Psoas muscle (tissue), 8 donors: ENCODE measurements at regions of chr16 and their contacts with region 1.

Region 1: DNA sequence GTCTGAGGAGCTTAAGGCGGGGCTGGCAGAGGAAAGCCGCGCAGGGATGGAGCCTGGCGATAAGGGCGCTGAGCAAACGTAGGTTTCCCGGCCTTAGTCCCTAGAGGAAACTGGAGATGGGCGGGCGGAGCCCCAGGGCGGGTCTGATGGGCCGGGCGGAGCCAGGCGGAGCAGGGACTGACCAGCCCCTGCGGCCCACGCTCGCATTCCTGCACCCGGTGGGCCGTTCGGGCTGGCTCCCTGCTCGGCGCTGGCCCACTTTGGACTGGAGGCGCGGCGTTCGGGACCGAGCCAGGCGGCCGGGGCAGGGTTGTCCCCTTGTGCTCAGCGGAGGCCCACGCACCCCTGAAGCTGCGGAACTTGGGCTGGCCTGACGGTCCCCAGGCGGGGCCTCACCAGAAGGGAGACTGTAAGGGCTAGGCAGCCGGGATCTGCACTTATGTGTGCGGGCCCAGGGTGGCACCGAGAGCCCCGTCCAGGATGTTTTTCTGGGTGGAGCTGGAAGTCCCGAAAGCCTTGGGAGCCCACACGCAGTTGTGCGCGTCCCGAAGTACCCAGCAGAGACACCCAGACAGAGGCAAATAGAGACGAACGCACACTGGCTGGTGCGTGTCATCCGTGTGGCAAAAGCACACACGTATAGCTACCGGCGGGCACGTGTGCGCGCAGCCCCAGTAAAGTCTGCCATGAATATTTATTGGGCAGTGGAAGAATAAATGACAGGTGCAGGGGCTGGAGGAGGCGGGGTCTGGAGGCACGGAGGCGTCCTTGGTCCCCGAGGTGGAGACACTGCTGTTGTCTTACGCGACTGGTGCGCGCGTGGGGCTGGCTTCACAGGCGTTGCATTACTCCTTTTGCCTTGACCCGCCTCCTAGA is 1.4 kb downstream of the PYDC1 start:
- DNase-seq: peak; percentile 76 to 89
- ATAC-seq: peak; percentile 68 to 76 (median 73)
- H3K4me3 ChIP-seq: peak overlapping the region; percentile 89
- H3K27ac ChIP-seq: peak overlapping the region; percentile 99
- H3K4me1 ChIP-seq: peaks cover 52% of the 10 kb centered on the region
- H3K27me3 ChIP-seq: no peaks in the 10 kb centered on the region
- CTCF ChIP-seq: no peak

Region 2: GRCh38 chr16:31179747-31180459 is 35.6 kb before region 1 on chr16 and contains the start of gene FUS:
- intact Hi-C with region 1: loop called (anchors 2 to 5 kb)
- DNase-seq: peak; percentile 88 to 96
- ATAC-seq: peak; percentile 81 to 88 (median 85)
- H3K4me3 ChIP-seq: peak within 1 kb of the TSS; percentile 95
- H3K27ac ChIP-seq: peak within 1 kb of the TSS; percentile 99
- H3K4me1 ChIP-seq: peaks cover 34% of the 10 kb centered on the region
- H3K27me3 ChIP-seq: no peaks in the 10 kb centered on the region
- CTCF ChIP-seq: no peak
- total RNA-seq, gene FUS: 133 to 246 (median 160) TPM

Region 3: DNA sequence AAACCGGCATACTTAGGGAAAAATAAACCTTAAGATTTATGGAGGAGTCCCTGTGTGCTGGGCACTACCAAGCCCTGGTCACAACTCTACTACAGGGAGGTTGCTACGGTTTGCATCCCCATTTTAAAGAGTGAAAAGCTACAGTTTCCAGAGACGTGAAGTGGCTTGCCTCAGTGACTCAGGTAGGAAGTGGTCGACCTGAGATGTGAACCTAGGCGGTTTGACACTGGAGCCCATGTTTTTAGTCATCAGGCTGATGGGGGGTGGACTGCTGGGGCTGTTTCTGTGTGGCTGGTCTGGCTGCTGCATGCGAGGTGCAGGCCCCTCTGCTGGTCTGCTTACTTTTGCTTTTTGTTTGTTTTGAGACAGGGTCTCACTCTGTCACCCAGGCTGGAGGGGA is 206.1 kb after region 1 on chr16:
- intact Hi-C with region 1: loop called in 1 of 2 experiments (anchors 5 kb)
- DNase-seq: no peak
- ATAC-seq: no peak
- H3K4me3 ChIP-seq: no peak overlapping the region
- H3K27ac ChIP-seq: no peak overlapping the region
- H3K4me1 ChIP-seq: peaks cover 8% of the 10 kb centered on the region
- H3K27me3 ChIP-seq: no peaks in the 10 kb centered on the region
- CTCF ChIP-seq: no peak

Region 4: GRCh38 chr16:31440516-31441184 is 225.1 kb after region 1 on chr16:
- intact Hi-C with region 1: loop called in 1 of 2 experiments (anchors 5 kb)
- DNase-seq: peak in 1 of 2 donors; percentile 3
- ATAC-seq: no peak
- H3K4me3 ChIP-seq: no peak overlapping the region
- H3K27ac ChIP-seq: peak overlapping the region; percentile 94
- H3K4me1 ChIP-seq: peaks cover 19% of the 10 kb centered on the region
- H3K27me3 ChIP-seq: no peaks in the 10 kb centered on the region
- CTCF ChIP-seq: no peak